HepG2 (cell line): ENCODE measurements at regions of chr18 and their contacts with region 1.

Region 1: GRCh38 chr18:78156466-78156865 is 823.2 kb upstream of the SALL3 start:
- DNase-seq: no peak
- ATAC-seq: no peak
- H3K4me3 ChIP-seq: no peak overlapping the region
- H3K27ac ChIP-seq: no peak overlapping the region
- H3K4me1 ChIP-seq: no peaks in the 10 kb centered on the region
- H3K27me3 ChIP-seq: peaks cover 0 to 5% of the 10 kb centered on the region in 2 experiments; a peak in 2 of 5 replicates
- CTCF ChIP-seq: no peak
- EP300 ChIP-seq: no peak
- POLR2A ChIP-seq: no peak
- RAD21 ChIP-seq: no peak

Region 2: DNA sequence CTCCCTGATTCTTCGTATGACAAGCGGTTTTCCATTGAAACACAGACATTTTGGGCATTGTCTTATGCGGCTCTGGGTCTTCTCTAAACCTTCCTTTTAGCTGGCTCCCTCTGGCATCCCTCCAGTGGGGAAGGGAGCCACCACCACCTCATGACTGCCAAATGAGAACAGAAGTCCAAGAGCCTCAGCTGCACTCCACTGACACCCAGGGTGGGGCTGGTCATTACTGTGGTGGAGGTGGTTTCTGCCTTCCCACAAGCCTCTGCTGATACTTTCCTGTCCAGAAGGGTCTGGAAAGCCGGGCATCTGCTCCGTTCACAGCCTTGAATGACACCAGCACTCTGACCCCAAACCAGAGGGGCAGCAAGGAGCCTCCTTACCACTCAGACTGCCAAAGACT is 1874.9 kb before region 1 on chr18:
- CTCF ChIA-PET with region 1: no interaction called
- POLR2A ChIA-PET with region 1: no interaction called
- in situ Hi-C with region 1: loop called (anchors 5 kb)
- intact Hi-C with region 1: no loop called
- DNase-seq: no peak
- ATAC-seq: no peak
- H3K4me3 ChIP-seq: no peak overlapping the region
- H3K27ac ChIP-seq: no peak overlapping the region
- H3K4me1 ChIP-seq: no peaks in the 10 kb centered on the region
- H3K27me3 ChIP-seq: peaks cover 0 to 15% of the 10 kb centered on the region in 2 experiments; a peak in 2 of 5 replicates
- CTCF ChIP-seq: no peak
- EP300 ChIP-seq: no peak
- POLR2A ChIP-seq: no peak
- RAD21 ChIP-seq: no peak

Region 3: GRCh38 chr18:78169174-78169864 is 12.9 kb after region 1 on chr18:
- CTCF ChIA-PET with region 1: no interaction called
- POLR2A ChIA-PET with region 1: no interaction called
- in situ Hi-C with region 1: no loop called
- intact Hi-C with region 1: no loop called
- DNase-seq: no peak
- ATAC-seq: no peak
- H3K4me3 ChIP-seq: no peak overlapping the region
- H3K27ac ChIP-seq: no peak overlapping the region
- H3K4me1 ChIP-seq: no peaks in the 10 kb centered on the region
- H3K27me3 ChIP-seq: no peaks in the 10 kb centered on the region; a peak in 2 of 5 replicates
- CTCF ChIP-seq: no peak
- EP300 ChIP-seq: no peak
- POLR2A ChIP-seq: no peak
- RAD21 ChIP-seq: no peak